ENCODE measurements at regions of chr20 and their contacts with region 1.

Region 1: GRCh38 chr20:58039274-58040092 is 189.0 kb downstream of the ANKRD60 start:
- DNase-seq: peak in 1 of 10 donors; percentile 77

Region 2: GRCh38 chr20:57964011-57964862 is 75.2 kb before region 1 on chr20:
- intact Hi-C with region 1: loop called (anchors 5 kb)
- DNase-seq: peak in 7 of 10 donors; percentile 12 to 88 (median 37)

Measured in posterior cingulate gyrus (tissue), 11 donors.